ENCODE measurements at regions of chr4 and their contacts with region 1.

Region 1: GRCh38 chr4:89254847-89255246 is 52.8 kb downstream of the GPRIN3 start:
- DNase-seq: peak; percentile 57
- H3K4me3 ChIP-seq: no peak overlapping the region
- H3K27ac ChIP-seq: no peak overlapping the region
- H3K4me1 ChIP-seq: no peaks in the 10 kb centered on the region
- H3K27me3 ChIP-seq: 0 out of 2 replicates have a peak, but pooled peaks cover 17% of the 10 kb centered on the region

Region 2: GRCh38 chr4:89434364-89434988 is 179.6 kb after region 1 on chr4:
- in situ Hi-C with region 1: loop called (anchors 10 kb)
- DNase-seq: peak; percentile 70
- H3K4me3 ChIP-seq: no peak overlapping the region
- H3K27ac ChIP-seq: no peak overlapping the region
- H3K4me1 ChIP-seq: no peaks in the 10 kb centered on the region
- H3K27me3 ChIP-seq: no peaks in the 10 kb centered on the region